Naive thymus-derived CD4-positive, alpha-beta T cell (primary cell): ENCODE measurements at regions of chr10 and their contacts with region 1.

Region 1: DNA sequence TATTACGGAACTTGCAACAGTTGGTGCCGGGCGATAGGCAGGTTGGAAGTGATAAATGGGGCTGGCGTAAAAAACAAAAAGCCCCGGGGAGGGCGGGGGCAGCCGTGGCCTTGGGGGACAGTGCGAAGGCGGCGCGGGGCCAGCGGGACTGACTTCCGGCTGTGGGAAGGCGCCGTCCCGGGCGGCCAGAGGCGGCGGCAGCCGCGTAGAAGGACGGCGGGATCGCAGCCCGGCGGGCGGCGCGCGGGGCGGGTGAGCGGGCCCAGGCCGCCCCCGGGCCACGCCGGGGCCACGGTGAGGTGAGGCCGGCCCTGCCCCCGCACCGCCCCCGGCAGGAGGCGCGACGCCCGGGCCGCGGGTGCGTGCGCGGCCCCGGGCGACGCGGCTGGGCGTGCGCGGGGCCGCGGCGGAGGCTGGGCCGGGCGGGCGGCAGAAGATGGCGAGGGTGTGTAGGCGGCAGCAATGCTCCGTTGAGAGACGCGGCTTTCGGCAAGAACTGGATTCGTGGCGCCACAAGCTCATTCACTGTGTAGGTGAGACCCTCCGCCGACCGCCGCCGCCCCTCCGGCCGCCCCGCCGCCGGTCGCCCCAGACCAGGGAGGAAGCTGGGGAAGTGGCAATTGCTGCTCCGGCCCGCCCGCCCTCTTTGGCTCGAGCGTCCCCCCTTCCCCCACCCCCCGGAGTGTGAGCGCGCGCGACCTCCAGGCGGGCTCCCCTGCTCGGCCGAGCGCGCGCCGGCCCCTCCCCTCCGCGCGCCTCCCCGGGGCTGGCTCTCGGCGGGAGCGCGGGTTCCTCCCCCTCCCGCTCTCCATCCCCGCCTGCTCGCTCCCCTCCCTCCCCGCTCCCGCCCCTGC is at the start of gene LCOR:
- DNase-seq: peak; percentile 75 to 88 (median 84)
- ATAC-seq: peak; percentile 85
- H3K4me3 ChIP-seq: peak within 1 kb of the TSS; percentile 65
- H3K4me3 Mint-ChIP-seq: peak within 1 kb of the TSS; percentile 84 to 96 (median 93)
- H3K27ac ChIP-seq: peak within 1 kb of the TSS; percentile 88
- H3K27ac Mint-ChIP-seq: peak within 1 kb of the TSS; percentile 88 to 99 (median 94)
- H3K4me1 ChIP-seq: peaks cover 25 to 26% of the 10 kb centered on the region in 2 donors
- H3K4me1 Mint-ChIP-seq: peaks cover 36 to 57% (median 51%) of the 10 kb centered on the region in 7 donors
- H3K27me3 ChIP-seq: no peaks in the 10 kb centered on the region
- H3K27me3 Mint-ChIP-seq: peaks cover 0 to 8% (median 0%) of the 10 kb centered on the region in 5 donors
- total RNA-seq, gene LCOR: 25.3 to 55.9 (median 51.8) TPM

Region 2: DNA sequence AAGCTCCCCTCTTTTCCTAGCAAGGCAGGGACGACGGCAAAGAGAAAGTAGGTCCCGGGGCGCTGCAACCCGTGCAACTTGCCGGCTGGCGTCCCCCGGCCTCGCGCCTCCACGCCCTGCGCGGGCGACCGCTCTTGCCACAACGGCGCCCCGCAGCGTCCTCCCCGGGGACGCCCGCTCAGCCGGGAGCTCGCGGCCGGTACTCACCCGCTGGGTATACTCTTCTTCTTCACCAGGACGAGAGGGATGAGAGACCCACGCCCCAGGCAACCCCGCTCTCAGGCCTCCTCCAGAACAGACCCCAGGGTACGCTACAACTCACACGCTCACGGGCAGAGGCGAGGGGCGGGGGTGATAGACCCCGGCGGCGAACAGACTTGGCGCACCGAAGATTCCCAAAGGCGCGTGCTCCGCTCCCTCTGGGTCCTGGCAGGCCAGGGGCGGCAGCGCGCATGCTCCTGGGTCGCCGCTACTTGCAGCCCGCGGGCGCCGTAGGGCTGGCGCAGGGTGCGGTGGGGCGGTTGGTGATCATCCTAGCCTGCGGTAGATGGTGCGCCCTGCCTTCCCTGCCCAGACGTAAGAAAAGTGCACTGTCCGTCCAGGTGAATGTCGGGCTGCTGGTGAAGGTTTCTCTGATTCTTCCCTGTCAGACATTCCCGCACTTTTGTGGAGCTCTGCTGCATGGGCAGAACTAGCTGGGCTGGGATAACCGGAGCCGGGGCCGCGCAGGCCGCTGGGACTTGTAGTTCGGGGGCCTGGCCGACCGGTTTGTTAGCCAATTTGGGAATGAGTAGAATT is 924.4 kb before region 1 on chr10 and contains the start of gene CC2D2B:
- CTCF ChIA-PET with region 1: no interaction called
- POLR2A ChIA-PET with region 1: no interaction called
- intact Hi-C with region 1: loop called in 1 of 2 experiments (anchors 5 kb)
- DNase-seq: peak; percentile 26 to 78 (median 53)
- ATAC-seq: peak; percentile 84
- H3K4me3 ChIP-seq: peak within 1 kb of the TSS; percentile 62
- H3K4me3 Mint-ChIP-seq: peak within 1 kb of the TSS; percentile 92 to 95 (median 94)
- H3K27ac ChIP-seq: peak within 1 kb of the TSS; percentile 65
- H3K27ac Mint-ChIP-seq: peak within 1 kb of the TSS; percentile 29 to 92 (median 89)
- H3K4me1 ChIP-seq: no peaks in the 10 kb centered on the region
- H3K4me1 Mint-ChIP-seq: peaks cover 11 to 20% (median 18%) of the 10 kb centered on the region in 7 donors
- H3K27me3 ChIP-seq: no peaks in the 10 kb centered on the region
- H3K27me3 Mint-ChIP-seq: peaks cover 0 to 20% (median 0%) of the 10 kb centered on the region in 5 donors
- total RNA-seq, gene CC2D2B: 0.64 to 0.99 TPM in 2 of 5 experiments, not detected in the others

Region 3: GRCh38 chr10:96470116-96470743 is 361.9 kb before region 1 on chr10:
- CTCF ChIA-PET with region 1: no interaction called
- POLR2A ChIA-PET with region 1: no interaction called
- intact Hi-C with region 1: loop called in 1 of 2 experiments (anchors 1 kb)
- DNase-seq: peak in 3 of 9 donors; percentile 8 to 23 (median 10)
- ATAC-seq: peak; percentile 62
- H3K4me3 ChIP-seq: no peak overlapping the region
- H3K4me3 Mint-ChIP-seq: no peak overlapping the region
- H3K27ac ChIP-seq: no peak overlapping the region
- H3K27ac Mint-ChIP-seq: no peak overlapping the region
- H3K4me1 ChIP-seq: no peaks in the 10 kb centered on the region
- H3K4me1 Mint-ChIP-seq: peaks cover 0 to 1% (median 0%) of the 10 kb centered on the region in 7 donors
- H3K27me3 ChIP-seq: no peaks in the 10 kb centered on the region
- H3K27me3 Mint-ChIP-seq: peaks cover 13 to 27% (median 22%) of the 10 kb centered on the region in 5 donors

Region 4: DNA sequence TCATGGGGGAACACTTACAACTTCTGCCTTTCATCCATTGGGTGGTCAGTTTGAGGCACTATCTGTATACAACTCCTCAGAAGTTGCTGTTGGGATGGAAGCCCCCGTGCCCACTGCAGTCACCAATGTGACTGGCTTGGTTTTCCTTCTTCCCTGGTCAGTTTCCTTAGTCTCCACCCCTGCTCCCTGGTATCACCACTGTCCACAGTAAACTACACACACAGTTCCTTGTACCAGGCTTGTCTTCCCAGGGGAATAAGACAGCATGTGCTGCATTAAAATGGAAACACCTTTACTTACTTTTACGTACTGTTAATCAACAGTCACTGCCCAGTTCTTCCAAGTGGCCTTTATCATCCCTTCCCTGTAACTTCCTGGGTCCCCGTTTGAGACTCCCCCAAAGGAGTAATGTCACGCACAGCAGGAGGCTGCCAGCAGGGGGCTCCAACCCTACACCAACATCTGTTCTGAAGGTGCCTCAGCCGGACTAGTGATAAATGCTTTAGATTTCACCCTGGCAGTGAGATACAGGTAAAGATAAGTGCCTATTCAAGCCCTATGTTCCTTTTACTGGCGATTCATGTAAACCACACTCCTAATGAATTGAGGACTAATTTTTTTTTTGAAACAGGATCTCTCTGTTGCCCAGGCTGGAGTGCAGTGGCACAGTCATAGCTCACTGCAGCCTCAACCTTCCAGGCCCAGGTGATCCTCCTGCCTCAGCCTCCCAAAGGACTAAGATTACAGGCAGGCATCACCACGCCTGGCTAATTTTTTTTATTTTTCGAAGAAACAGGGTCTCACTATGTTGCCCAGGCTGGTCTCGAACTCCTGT is 66.5 kb before region 1 on chr10:
- CTCF ChIA-PET with region 1: interaction called, 5 read pairs
- POLR2A ChIA-PET with region 1: no interaction called
- intact Hi-C with region 1: loop called (anchors 1 kb)
- DNase-seq: peak; percentile 39 to 71 (median 64)
- ATAC-seq: peak; percentile 92
- H3K4me3 ChIP-seq: no peak overlapping the region
- H3K4me3 Mint-ChIP-seq: no peak overlapping the region
- H3K27ac ChIP-seq: no peak overlapping the region
- H3K27ac Mint-ChIP-seq: peak overlapping the region in 1 of 9 donors; percentile 30
- H3K4me1 ChIP-seq: no peaks in the 10 kb centered on the region
- H3K4me1 Mint-ChIP-seq: peaks cover 0 to 6% (median 3%) of the 10 kb centered on the region in 7 donors
- H3K27me3 ChIP-seq: no peaks in the 10 kb centered on the region
- H3K27me3 Mint-ChIP-seq: peaks cover 0 to 4% (median 3%) of the 10 kb centered on the region in 5 donors

Region 5: GRCh38 chr10:97025613-97026242 is 193.6 kb after region 1 on chr10:
- CTCF ChIA-PET with region 1: no interaction called
- POLR2A ChIA-PET with region 1: no interaction called
- intact Hi-C with region 1: loop called in 1 of 2 experiments (anchors 5 kb)
- DNase-seq: peak in 7 of 9 donors; percentile 24 to 47 (median 39)
- ATAC-seq: peak; percentile 60
- H3K4me3 ChIP-seq: no peak overlapping the region
- H3K4me3 Mint-ChIP-seq: no peak overlapping the region
- H3K27ac ChIP-seq: no peak overlapping the region
- H3K27ac Mint-ChIP-seq: no peak overlapping the region
- H3K4me1 ChIP-seq: no peaks in the 10 kb centered on the region
- H3K4me1 Mint-ChIP-seq: peaks cover 0 to 14% (median 0%) of the 10 kb centered on the region in 7 donors
- H3K27me3 ChIP-seq: no peaks in the 10 kb centered on the region
- H3K27me3 Mint-ChIP-seq: peaks cover 0 to 8% (median 0%) of the 10 kb centered on the region in 5 donors

Region 6: GRCh38 chr10:98134431-98135221 is 1302.5 kb after region 1 on chr10 and contains the start of gene R3HCC1L:
- CTCF ChIA-PET with region 1: no interaction called
- POLR2A ChIA-PET with region 1: no interaction called
- intact Hi-C with region 1: loop called in 1 of 2 experiments (anchors 5 kb)
- DNase-seq: peak; percentile 87 to 95 (median 93)
- ATAC-seq: peak; percentile 98
- H3K4me3 ChIP-seq: peak within 1 kb of the TSS; percentile 91
- H3K4me3 Mint-ChIP-seq: peak within 1 kb of the TSS; percentile 78 to 95 (median 86)
- H3K27ac ChIP-seq: peak within 1 kb of the TSS; percentile 96
- H3K27ac Mint-ChIP-seq: peak within 1 kb of the TSS; percentile 71 to 98 (median 96)
- H3K4me1 ChIP-seq: peaks cover 23 to 27% of the 10 kb centered on the region in 2 donors
- H3K4me1 Mint-ChIP-seq: peaks cover 0 to 53% (median 44%) of the 10 kb centered on the region in 7 donors
- H3K27me3 ChIP-seq: no peaks in the 10 kb centered on the region
- H3K27me3 Mint-ChIP-seq: peaks cover 0 to 2% (median 0%) of the 10 kb centered on the region in 5 donors
- total RNA-seq, gene R3HCC1L: 17.6 to 25.3 (median 20.4) TPM